PC-9 (cell line): ENCODE measurements at regions of chr1 and their contacts with region 1.

Region 1: DNA sequence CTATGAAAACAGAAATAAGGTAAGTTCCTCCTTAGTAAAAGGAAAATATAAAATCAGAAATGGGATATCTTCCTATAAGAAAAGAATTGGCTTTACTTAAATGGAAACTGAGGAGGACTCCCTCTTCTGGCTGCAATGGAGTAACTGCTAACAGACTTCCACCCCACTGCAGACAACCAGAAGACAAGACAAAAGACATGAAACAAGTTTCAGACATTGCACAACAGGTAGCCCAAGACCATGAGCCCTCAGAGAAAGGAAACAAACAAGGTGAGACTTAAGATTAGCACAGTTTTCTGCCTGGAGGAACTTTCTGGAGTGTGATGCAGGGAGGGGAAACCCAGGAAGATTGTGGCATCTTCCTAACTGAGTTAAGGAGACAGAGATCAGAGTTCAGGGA is 17.0 kb upstream of the OLFML2B start:
- DNase-seq: peak in 1 of 2 experiments; percentile 39
- H3K4me3 ChIP-seq: no peak overlapping the region
- H3K27ac ChIP-seq: no peak overlapping the region
- H3K4me1 ChIP-seq: 0 out of 2 replicates have a peak, but pooled peaks cover 1% of the 10 kb centered on the region
- H3K27me3 ChIP-seq: no peaks in the 10 kb centered on the region
- CTCF ChIP-seq: peak; percentile 58; the same call in 1 of the 2 replicates

Region 2: GRCh38 chr1:162070825-162071224 is 30.1 kb after region 1 on chr1:
- CTCF ChIA-PET with region 1: interaction called, 10 read pairs
- POLR2A ChIA-PET with region 1: no interaction called
- intact Hi-C with region 1: no loop called
- DNase-seq: no peak
- H3K4me3 ChIP-seq: peak overlapping the region; percentile 67
- H3K27ac ChIP-seq: 0 out of 2 replicates have a peak overlapping the region, but pooled peaks have one; percentile 2
- H3K4me1 ChIP-seq: peaks cover 64% of the 10 kb centered on the region
- H3K27me3 ChIP-seq: no peaks in the 10 kb centered on the region
- CTCF ChIP-seq: no peak